ENCODE measurements at regions of chr6 and their contacts with region 1.

Region 1: DNA sequence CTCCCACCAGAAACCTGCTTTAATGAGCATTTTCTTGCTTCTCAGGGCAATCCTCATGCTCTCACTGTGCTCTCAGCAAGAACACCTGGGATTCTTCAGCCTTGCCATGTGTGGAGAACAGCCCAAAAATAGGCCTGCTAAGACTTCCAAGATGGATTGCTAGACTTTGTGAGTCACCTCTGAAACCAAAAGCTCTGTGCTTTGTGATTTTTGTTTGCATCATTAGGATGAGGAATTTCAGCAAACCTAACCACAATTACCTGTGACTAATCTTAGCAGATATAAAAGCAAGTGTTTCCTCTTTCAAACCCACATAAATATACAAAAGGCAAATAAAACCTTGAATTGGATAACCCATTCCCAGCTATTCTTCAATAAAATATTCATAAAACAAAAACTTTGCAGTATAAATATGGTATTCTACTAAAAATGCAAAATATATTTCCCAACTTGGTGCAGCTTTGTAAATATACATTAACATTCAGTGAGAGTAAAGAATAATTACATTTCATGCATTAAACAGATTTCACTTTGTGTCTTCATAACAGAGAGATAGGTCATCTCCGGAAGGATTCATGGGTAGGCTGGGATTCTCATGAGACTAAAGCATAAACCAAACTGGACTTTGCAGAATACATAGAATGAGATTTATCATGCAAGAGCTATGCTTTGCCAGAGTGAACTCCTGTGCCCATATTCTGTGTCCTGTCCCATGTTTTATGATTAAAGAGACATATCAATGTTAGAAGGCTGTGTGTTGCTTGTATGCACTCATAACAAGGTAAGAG is 33.5 kb downstream of the TPBG start:
- DNase-seq: peak; percentile 71
- H3K4me3 ChIP-seq: no peak overlapping the region
- CTCF ChIP-seq: no peak

Region 2: GRCh38 chr6:81962214-81962613 is 434.9 kb before region 1 on chr6:
- CTCF ChIA-PET with region 1: no interaction called
- POLR2A ChIA-PET with region 1: no interaction called
- DNase-seq: no peak
- H3K4me3 ChIP-seq: no peak overlapping the region
- CTCF ChIP-seq: no peak

Region 3: DNA sequence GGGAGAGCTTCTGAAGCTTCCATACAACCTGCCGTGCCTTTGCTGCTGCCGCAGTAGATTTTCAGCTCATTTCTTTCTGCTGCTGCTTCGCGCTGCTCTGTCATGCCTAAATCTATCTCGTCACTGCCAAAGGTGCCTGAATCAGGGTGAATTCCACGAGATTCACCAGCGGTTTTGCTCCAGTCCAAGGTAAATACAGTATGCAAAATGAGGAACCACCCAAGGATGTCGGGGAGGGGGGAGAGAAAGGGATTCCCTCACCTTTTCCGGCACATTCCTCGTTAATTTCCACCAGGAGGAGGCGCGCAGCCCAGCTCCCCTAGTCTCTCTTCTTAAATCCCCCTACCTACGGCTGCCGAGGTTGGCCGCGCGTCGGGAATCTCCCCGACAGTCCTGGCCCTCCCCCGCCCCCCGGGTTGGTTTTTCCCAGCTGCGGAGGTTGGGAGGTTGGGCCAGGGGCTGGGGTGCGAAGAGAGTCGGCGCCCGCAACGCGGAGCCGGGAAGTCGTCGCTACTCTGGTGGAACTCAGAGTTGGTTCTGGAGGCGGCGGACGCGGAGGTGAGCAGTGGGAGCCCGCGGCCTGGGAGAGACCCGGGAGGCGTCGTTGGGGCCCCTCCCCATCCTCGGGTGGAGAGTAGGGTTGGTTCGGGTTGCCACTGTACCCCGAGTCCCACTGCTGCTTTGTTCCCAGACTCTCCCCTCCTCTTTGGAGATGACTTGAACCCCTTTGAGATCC is 33.6 kb before region 1 on chr6 and contains the start of gene TPBG:
- CTCF ChIA-PET with region 1: no interaction called
- POLR2A ChIA-PET with region 1: interaction called, 16 read pairs
- DNase-seq: no peak
- H3K4me3 ChIP-seq: peak within 1 kb of the TSS; percentile 84
- CTCF ChIP-seq: peak; percentile 37

Measured in AG04449 (cell line).